ENCODE measurements at regions of chr15 and their contacts with region 1.

Region 1: GRCh38 chr15:85840065-85840801 is 45.5 kb upstream of the KLHL25 start:
- DNase-seq: peak; percentile 91
- ATAC-seq: peak; percentile 88
- H3K4me3 ChIP-seq: peak overlapping the region; percentile 42; the same call in 1 of the 2 replicates
- H3K27ac ChIP-seq: no peak overlapping the region
- H3K4me1 ChIP-seq: peaks cover 12% of the 10 kb centered on the region
- H3K27me3 ChIP-seq: peaks cover 5% of the 10 kb centered on the region; the same call in 1 of the 2 replicates
- CTCF ChIP-seq: peak; percentile 89

Region 2: GRCh38 chr15:85730001-85730820 is 110.0 kb before region 1 on chr15:
- CTCF ChIA-PET with region 1: no interaction called
- POLR2A ChIA-PET with region 1: no interaction called
- intact Hi-C with region 1: loop called (anchors 1 kb)
- DNase-seq: peak; percentile 80
- ATAC-seq: peak; percentile 64
- H3K4me3 ChIP-seq: no peak overlapping the region
- H3K27ac ChIP-seq: no peak overlapping the region
- H3K4me1 ChIP-seq: no peaks in the 10 kb centered on the region
- H3K27me3 ChIP-seq: no peaks in the 10 kb centered on the region
- CTCF ChIP-seq: peak; percentile 76

Region 3: GRCh38 chr15:85800467-85801123 is 39.6 kb before region 1 on chr15:
- CTCF ChIA-PET with region 1: interaction called, 5 read pairs
- POLR2A ChIA-PET with region 1: no interaction called
- intact Hi-C with region 1: loop called (anchors 1 kb)
- DNase-seq: peak; percentile 93
- ATAC-seq: peak; percentile 99
- H3K4me3 ChIP-seq: no peak overlapping the region
- H3K27ac ChIP-seq: no peak overlapping the region
- H3K4me1 ChIP-seq: peaks cover 11% of the 10 kb centered on the region
- H3K27me3 ChIP-seq: no peaks in the 10 kb centered on the region
- CTCF ChIP-seq: peak; percentile 40; the same call in 1 of the 2 replicates